ENCODE measurements at regions of chr6 and their contacts with region 1.

Region 1: GRCh38 chr6:49409951-49410542 is 53.0 kb downstream of the MMUT start:
- DNase-seq: peak; percentile 2 to 57
- ATAC-seq: peak; percentile 73 to 84
- H3K4me3 ChIP-seq: no peak overlapping the region
- H3K27ac ChIP-seq: no peak overlapping the region
- H3K4me1 ChIP-seq: peaks cover 2% of the 10 kb centered on the region; the same call in 1 of the 3 replicates
- CTCF ChIP-seq: peak; percentile 62
- EP300 ChIP-seq: no peak
- POLR2A ChIP-seq: no peak
- RAD21 ChIP-seq: peak; percentile 68 to 71

Region 2: DNA sequence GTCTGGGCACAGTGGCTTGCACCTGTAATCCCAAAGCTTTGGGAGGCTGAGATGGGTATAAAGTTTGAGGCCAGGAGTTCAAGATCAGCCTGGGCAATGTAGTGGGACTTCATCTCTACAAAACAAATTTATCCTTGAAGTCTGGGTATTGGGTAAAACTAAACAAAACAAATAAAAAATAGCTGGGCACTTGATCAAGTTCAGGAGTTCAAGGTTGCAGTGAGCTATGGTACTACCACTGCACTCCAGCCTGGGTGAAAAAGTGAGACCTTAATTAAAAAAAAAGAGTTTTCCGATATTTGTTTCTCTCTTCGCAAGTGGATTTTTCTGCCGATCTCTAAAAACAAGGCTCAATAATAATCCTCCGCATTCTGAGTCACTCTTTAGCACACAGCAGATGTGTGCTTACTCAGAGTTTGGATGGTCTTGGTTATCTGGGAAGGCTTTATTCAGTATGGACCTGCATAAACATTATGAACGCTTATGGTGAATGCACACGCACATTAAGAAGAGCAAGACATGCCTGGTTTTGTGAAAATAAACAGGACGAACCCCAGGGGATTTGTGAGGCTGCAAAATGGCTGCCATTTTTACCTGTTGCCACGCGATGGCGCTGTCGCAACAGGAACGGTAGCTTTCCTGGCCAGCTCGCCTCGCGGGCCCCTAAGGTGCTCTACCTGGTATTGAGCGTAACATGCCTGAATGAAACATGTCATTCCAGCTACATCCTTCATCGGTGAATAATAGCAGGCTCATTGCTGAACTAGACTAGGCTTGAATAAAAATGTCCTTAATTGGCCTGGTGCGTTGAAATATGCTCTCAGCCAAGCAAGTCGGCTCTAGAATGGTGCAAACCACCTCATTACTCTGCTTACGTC is 1622.2 kb before region 1 on chr6:
- CTCF ChIA-PET with region 1: interaction called, 12 read pairs
- POLR2A ChIA-PET with region 1: no interaction called
- DNase-seq: peak; percentile 47 to 59
- ATAC-seq: peak; percentile 80 to 92
- H3K4me3 ChIP-seq: no peak overlapping the region
- H3K27ac ChIP-seq: no peak overlapping the region
- H3K4me1 ChIP-seq: no peaks in the 10 kb centered on the region; the same call in 2 of the 3 replicates
- CTCF ChIP-seq: peak; percentile 87
- EP300 ChIP-seq: no peak
- POLR2A ChIP-seq: no peak
- RAD21 ChIP-seq: peak; percentile 92 to 93

Region 3: GRCh38 chr6:49423817-49424216 is 13.8 kb after region 1 on chr6:
- CTCF ChIA-PET with region 1: interaction called, 11 read pairs
- POLR2A ChIA-PET with region 1: no interaction called
- DNase-seq: peak; percentile 4
- ATAC-seq: no peak
- H3K4me3 ChIP-seq: no peak overlapping the region
- H3K27ac ChIP-seq: no peak overlapping the region
- H3K4me1 ChIP-seq: no peaks in the 10 kb centered on the region
- CTCF ChIP-seq: peak; percentile 54
- EP300 ChIP-seq: no peak
- POLR2A ChIP-seq: no peak
- RAD21 ChIP-seq: peak; percentile 57 to 66

Region 4: GRCh38 chr6:49506569-49507111 is 96.6 kb after region 1 on chr6:
- CTCF ChIA-PET with region 1: no interaction called
- POLR2A ChIA-PET with region 1: no interaction called
- DNase-seq: peak in 1 of 2 experiments; percentile 6
- ATAC-seq: no peak
- H3K4me3 ChIP-seq: no peak overlapping the region
- H3K27ac ChIP-seq: no peak overlapping the region
- H3K4me1 ChIP-seq: 0 out of 3 replicates have a peak, but pooled peaks cover 6% of the 10 kb centered on the region
- CTCF ChIP-seq: no peak
- EP300 ChIP-seq: no peak
- POLR2A ChIP-seq: no peak
- RAD21 ChIP-seq: no peak